Activated CD8-positive, alpha-beta T cell treated with anti-CD3 and anti-CD28 coated beads for 36 hours (primary cell): ENCODE measurements at regions of chr1 and their contacts with region 1.

Region 1: DNA sequence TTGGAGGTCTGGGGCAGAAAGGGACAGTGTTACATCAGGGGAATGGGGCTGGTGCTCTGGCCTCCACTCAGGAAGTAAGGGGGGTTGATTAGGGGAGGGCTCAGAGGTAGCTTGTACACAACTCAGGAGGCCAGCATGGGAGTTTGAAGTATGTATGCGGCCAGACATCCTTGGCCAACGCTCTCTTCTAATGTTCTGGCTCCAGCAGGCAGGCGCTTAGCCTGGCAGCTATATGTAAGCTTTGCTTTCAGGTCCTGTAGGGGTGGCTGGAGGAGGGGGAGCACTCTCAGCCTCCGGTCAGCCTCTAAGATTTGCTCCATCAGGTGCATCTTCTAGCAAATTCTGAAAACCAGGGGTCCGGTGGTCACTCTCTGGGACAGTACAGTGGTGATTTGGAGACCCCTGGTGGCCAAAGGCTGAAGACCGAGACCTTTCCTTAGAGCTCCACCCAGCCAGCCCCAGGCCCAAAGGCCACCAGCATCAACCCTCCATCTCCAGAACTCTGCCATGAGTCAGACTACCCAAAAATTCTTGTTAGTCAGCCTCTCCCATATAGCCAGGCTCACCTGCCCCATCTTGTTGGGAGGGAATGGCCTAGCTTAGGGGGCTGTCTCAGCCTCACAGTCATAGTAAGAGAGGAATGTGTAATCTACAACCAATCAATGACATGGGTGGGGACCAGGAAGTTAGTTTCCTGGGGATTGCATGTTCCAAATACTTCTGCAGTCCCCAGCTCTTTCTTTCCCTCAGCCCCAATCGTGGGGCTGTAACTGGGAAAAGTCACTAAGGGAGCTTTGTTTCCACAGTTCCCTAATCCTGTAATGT is 9.7 kb upstream of the COL8A2 start:
- DNase-seq: peak; percentile 75
- ATAC-seq: peak; percentile 89
- H3K4me3 Mint-ChIP-seq: no peak overlapping the region
- H3K27ac Mint-ChIP-seq: peak overlapping the region; percentile 28
- H3K4me1 Mint-ChIP-seq: no peaks in the 10 kb centered on the region
- H3K27me3 Mint-ChIP-seq: no peaks in the 10 kb centered on the region
- CTCF ChIP-seq: peak; percentile 90

Region 2: DNA sequence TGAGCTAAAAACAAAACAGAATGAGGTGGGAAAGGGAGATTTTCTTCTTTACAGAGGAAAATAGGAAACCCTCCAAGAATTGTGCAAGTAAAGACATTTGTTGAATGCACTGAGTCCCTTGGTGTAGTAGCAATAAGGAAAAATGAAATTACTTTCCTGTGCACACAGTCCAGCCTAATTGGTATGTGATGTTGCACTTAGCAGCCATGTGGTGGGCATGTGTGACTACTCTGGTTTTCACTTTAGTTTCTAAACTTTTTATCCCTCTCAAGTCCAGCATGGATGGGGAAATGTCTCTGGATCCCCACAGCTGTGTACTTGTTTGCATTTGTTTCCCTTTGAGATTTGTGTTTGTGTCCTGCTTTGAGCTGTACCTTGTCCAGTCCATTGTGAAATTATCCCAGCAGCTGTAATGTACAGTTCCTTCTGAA is 210.9 kb before region 1 on chr1:
- CTCF ChIA-PET with region 1: no interaction called
- POLR2A ChIA-PET with region 1: no interaction called
- intact Hi-C with region 1: no loop called
- DNase-seq: no peak
- ATAC-seq: no peak
- H3K4me3 Mint-ChIP-seq: no peak overlapping the region
- H3K27ac Mint-ChIP-seq: no peak overlapping the region
- H3K4me1 Mint-ChIP-seq: no peaks in the 10 kb centered on the region
- H3K27me3 Mint-ChIP-seq: no peaks in the 10 kb centered on the region
- CTCF ChIP-seq: no peak

Region 3: DNA sequence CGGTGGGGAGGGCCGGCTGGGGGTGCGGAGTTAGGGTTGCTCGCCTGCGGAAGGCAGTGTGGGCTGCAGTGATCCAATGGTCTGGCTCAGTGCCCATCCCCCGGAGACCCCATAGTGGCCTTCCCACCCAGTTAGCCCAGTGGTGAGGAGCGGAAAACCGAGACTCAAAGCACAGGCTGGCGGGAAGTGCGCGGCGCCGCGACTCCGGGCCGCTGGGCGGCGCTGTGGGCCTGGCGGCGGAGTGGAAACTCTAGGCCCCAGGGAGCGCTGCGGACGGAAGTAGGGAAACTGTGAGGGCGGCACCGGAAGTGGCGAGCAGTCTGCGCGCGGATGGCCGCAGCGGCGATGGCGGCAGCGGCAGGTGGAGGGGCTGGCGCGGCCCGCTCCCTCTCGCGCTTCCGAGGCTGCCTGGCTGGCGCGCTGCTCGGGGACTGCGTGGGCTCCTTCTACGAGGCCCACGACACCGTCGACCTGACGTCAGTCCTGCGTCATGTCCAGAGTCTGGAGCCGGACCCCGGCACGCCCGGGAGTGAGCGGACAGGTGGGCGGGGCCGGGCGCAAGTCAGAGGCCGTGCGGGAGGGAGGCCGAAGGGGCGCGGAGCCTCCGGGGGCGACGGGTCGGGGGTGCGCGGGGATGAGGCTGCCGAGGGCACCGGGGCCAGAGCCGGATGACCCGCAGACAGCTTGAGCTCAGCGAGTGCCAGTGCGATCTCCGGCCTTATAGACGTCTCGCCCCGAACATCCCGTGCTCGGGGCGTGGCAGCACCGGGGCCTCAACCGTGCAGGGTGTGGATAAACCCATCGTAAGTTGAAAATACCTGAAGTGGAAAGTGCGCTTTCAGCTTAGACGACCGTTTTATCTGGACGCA is 45.9 kb before region 1 on chr1 and contains the start of gene ADPRS:
- CTCF ChIA-PET with region 1: interaction called, 71 read pairs
- POLR2A ChIA-PET with region 1: interaction called, 3 read pairs
- intact Hi-C with region 1: no loop called
- DNase-seq: peak; percentile 92
- ATAC-seq: peak; percentile 88
- H3K4me3 Mint-ChIP-seq: peak within 1 kb of the TSS; percentile 90
- H3K27ac Mint-ChIP-seq: peak within 1 kb of the TSS; percentile 89
- H3K4me1 Mint-ChIP-seq: peaks cover 10% of the 10 kb centered on the region
- H3K27me3 Mint-ChIP-seq: peaks cover 14% of the 10 kb centered on the region
- CTCF ChIP-seq: peak; percentile 99
- total RNA-seq, gene ADPRS: 52.7 to 54.9 TPM

Region 4: DNA sequence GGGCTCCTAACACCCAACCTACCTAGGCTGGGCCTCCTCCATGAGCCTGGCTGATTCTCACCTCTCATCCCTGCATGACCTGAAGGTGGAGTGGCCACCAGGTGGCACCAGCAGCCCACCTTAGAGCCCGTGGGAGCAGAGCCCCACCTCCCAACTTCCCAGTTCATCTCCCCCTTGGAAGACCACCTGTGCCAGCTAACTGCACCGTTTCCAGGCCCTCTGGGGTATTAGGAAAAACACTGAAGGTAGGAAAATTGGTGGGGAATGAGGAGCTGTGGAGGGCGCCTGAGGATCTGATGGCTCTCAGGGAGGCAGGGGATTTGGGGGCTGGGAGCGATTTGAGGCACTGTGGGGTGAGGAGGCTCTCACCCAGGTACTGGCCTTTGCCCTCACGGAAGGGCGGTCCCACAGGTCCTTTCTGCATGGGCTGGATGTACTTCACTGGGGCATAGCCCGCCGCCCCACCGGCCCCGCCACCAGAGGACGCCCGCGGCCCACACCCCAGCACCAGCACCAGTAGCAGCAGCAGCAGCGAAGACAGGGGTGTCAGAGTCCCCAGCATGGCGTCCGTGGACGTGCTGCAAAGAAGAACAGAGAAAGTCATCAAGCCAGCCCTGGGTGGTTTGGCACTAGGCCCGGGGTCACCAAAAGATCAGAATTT is 34.9 kb before region 1 on chr1:
- CTCF ChIA-PET with region 1: interaction called, 86 read pairs
- POLR2A ChIA-PET with region 1: interaction called, 8 read pairs
- intact Hi-C with region 1: loop called (anchors 2 kb)
- DNase-seq: peak; percentile 86
- ATAC-seq: peak; percentile 92
- H3K4me3 Mint-ChIP-seq: no peak overlapping the region
- H3K27ac Mint-ChIP-seq: no peak overlapping the region
- H3K4me1 Mint-ChIP-seq: peaks cover 6% of the 10 kb centered on the region
- H3K27me3 Mint-ChIP-seq: no peaks in the 10 kb centered on the region
- CTCF ChIP-seq: peak; percentile 93

Region 5: GRCh38 chr1:36109041-36109679 is 25.6 kb before region 1 on chr1:
- CTCF ChIA-PET with region 1: interaction called, 37 read pairs
- POLR2A ChIA-PET with region 1: interaction called, 5 read pairs
- intact Hi-C with region 1: no loop called
- DNase-seq: peak; percentile 78
- ATAC-seq: peak; percentile 96
- H3K4me3 Mint-ChIP-seq: no peak overlapping the region
- H3K27ac Mint-ChIP-seq: peak overlapping the region; percentile 82
- H3K4me1 Mint-ChIP-seq: peaks cover 34% of the 10 kb centered on the region
- H3K27me3 Mint-ChIP-seq: no peaks in the 10 kb centered on the region
- CTCF ChIP-seq: no peak

Region 6: DNA sequence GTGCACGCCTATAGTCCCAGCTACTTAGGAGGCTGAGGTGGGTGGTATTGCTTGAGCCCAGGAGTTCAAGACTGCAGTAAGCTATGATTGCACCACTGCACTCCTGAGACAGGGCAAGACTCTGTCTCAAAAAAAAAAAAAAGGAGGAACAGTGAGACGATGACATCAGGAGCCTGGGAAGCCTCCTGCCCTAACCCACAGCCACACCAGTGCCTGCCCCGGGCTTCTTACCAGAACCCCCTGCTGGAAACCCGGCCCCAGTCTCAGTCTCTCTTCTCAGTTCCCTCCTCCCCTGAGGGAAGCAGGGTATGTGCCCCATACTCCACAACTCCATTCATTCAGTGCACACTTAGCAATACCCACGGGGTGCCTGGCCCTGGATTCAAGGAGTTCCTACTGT is 18.8 kb before region 1 on chr1:
- CTCF ChIA-PET with region 1: interaction called, 31 read pairs
- POLR2A ChIA-PET with region 1: interaction called, 5 read pairs
- intact Hi-C with region 1: no loop called
- DNase-seq: no peak
- ATAC-seq: no peak
- H3K4me3 Mint-ChIP-seq: no peak overlapping the region
- H3K27ac Mint-ChIP-seq: no peak overlapping the region
- H3K4me1 Mint-ChIP-seq: peaks cover 11% of the 10 kb centered on the region
- H3K27me3 Mint-ChIP-seq: no peaks in the 10 kb centered on the region
- CTCF ChIP-seq: no peak